Activated CD4-positive, alpha-beta memory T cell treated with anti-CD3 and anti-CD28 coated beads, Interleukin-2, amount 10 ng/mL, durations not matched to agents 7 days and 5 days (primary cell): ENCODE measurements at regions of chr2 and their contacts with region 1.

Region 1: GRCh38 chr2:10302479-10303180 is at the start of gene HPCAL1:
- DNase-seq: peak; percentile 86
- H3K4me3 Mint-ChIP-seq: peak within 1 kb of the TSS; percentile 98
- H3K27ac Mint-ChIP-seq: peak within 1 kb of the TSS; percentile 82
- H3K4me1 Mint-ChIP-seq: peaks cover 77% of the 10 kb centered on the region
- H3K27me3 Mint-ChIP-seq: no peaks in the 10 kb centered on the region
- total RNA-seq, gene HPCAL1: 70.0 to 71.4 TPM

Region 2: GRCh38 chr2:10382354-10383061 is 79.9 kb after region 1 on chr2:
- CTCF ChIA-PET with region 1: interaction called, 21 read pairs
- POLR2A ChIA-PET with region 1: interaction called, 13 read pairs
- DNase-seq: peak; percentile 54
- H3K4me3 Mint-ChIP-seq: peak overlapping the region; percentile 47
- H3K27ac Mint-ChIP-seq: peak overlapping the region; percentile 40
- H3K4me1 Mint-ChIP-seq: peaks cover 74% of the 10 kb centered on the region
- H3K27me3 Mint-ChIP-seq: no peaks in the 10 kb centered on the region

Region 3: GRCh38 chr2:10392548-10392947 is 89.9 kb after region 1 on chr2:
- CTCF ChIA-PET with region 1: no interaction called
- POLR2A ChIA-PET with region 1: no interaction called
- DNase-seq: no peak
- H3K4me3 Mint-ChIP-seq: no peak overlapping the region
- H3K27ac Mint-ChIP-seq: no peak overlapping the region
- H3K4me1 Mint-ChIP-seq: peaks cover 14% of the 10 kb centered on the region
- H3K27me3 Mint-ChIP-seq: no peaks in the 10 kb centered on the region

Region 4: DNA sequence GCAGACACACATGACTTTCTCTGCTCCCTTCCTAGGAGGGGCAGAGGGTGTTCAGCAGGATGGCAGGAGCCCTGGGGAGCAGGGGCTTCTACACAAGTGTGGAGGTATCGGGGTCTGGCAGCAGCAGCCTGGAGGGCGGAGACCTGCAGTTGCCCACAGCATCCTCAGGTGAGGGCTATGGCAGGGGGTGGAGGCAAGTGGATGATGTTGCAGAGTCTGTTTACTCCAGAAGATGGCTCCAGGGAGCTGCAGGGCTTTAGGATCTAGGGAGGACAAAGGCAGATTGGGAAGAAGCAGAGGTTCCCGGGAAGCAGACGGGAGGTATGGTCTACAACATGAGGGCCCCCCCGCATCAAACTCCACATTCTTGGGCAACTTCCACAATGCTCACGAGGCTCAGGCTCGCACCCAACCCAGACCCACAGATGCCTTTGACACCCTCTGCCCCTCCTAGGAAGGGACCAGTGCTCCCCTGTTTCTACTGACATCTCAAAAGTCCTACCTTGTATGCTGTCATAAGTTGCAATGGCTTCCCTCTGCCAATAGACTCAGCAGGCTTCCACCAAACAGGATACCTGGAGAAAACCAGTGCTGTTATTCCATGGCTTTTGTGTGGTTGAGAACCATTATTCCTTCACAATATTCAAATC is 406.8 kb after region 1 on chr2:
- CTCF ChIA-PET with region 1: no interaction called
- POLR2A ChIA-PET with region 1: no interaction called
- DNase-seq: no peak
- H3K4me3 Mint-ChIP-seq: no peak overlapping the region
- H3K27ac Mint-ChIP-seq: no peak overlapping the region
- H3K4me1 Mint-ChIP-seq: peaks cover 8% of the 10 kb centered on the region
- H3K27me3 Mint-ChIP-seq: peaks cover 39% of the 10 kb centered on the region